K562 (cell line): ENCODE measurements at regions of chr1 and their contacts with region 1.

Region 1: DNA sequence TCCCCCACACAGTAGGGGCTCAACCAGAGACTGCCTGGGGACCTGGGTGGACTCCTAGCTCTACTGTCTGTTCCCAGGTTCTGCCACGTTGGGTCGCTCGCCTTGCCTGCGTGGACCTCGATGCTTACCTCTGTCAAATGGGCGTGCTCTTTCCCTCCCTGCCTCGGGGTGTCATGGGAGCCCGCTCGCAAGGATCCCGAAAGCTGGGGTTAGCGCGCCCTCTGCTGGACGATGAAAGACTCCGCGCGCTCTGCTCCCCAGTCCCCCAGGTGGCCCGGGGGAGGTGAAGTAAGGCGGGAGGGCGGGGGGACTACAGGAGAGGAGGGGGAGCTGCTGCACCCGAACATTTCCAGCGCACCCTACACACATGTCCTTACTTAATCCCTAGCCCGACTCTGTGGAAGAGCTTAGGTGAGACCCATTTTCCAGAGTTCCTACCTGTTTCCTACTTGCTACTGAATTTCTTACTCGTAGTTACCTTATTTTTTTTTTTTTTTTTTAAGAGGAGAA is 2.3 kb upstream of the BSND start:
- DNase-seq: peak; percentile 90 to 96 (median 94)
- ATAC-seq: peak; percentile 94
- H3K4me3 ChIP-seq: peak overlapping the region; percentile 17; the same call in 1 of the 2 replicates
- H3K27ac ChIP-seq: no peak overlapping the region
- H3K4me1 ChIP-seq: peaks cover 0 to 21% of the 10 kb centered on the region in 2 experiments; a peak in 3 of 5 replicates
- H3K27me3 ChIP-seq: peaks cover 28 to 82% of the 10 kb centered on the region in 2 experiments
- CTCF ChIP-seq: peak; percentile 81 to 96 (median 89)
- EP300 ChIP-seq: no peak
- POLR2A ChIP-seq: no peak
- RAD21 ChIP-seq: peak; percentile 90 to 94

Region 2: GRCh38 chr1:54671985-54672608 is 324.3 kb before region 1 on chr1:
- CTCF ChIA-PET with region 1: no interaction called
- POLR2A ChIA-PET with region 1: no interaction called
- in situ Hi-C with region 1: no loop called
- intact Hi-C with region 1: loop called (anchors 10 kb)
- DNase-seq: peak; percentile 69 to 86 (median 80)
- ATAC-seq: peak; percentile 93
- H3K4me3 ChIP-seq: no peak overlapping the region
- H3K27ac ChIP-seq: no peak overlapping the region
- H3K4me1 ChIP-seq: no peaks in the 10 kb centered on the region
- H3K27me3 ChIP-seq: peaks cover 13 to 19% of the 10 kb centered on the region in 2 experiments; a peak in 4 of 5 replicates
- CTCF ChIP-seq: peak; percentile 92 to 97 (median 95)
- EP300 ChIP-seq: no peak
- POLR2A ChIP-seq: no peak
- RAD21 ChIP-seq: peak; percentile 91 to 98

Region 3: GRCh38 chr1:54681358-54681757 is 315.1 kb before region 1 on chr1:
- CTCF ChIA-PET with region 1: no interaction called
- POLR2A ChIA-PET with region 1: no interaction called
- in situ Hi-C with region 1: loop called (anchors 10 kb)
- intact Hi-C with region 1: loop called (anchors 10 kb)
- DNase-seq: no peak
- ATAC-seq: no peak; the same call in 2 of the 3 replicates
- H3K4me3 ChIP-seq: no peak overlapping the region
- H3K27ac ChIP-seq: no peak overlapping the region
- H3K4me1 ChIP-seq: peaks cover 0 to 3% of the 10 kb centered on the region in 2 experiments; a peak in 1 of 5 replicates
- H3K27me3 ChIP-seq: peaks cover 45 to 69% of the 10 kb centered on the region in 2 experiments
- CTCF ChIP-seq: no peak
- EP300 ChIP-seq: no peak
- POLR2A ChIP-seq: no peak
- RAD21 ChIP-seq: no peak

Region 4: DNA sequence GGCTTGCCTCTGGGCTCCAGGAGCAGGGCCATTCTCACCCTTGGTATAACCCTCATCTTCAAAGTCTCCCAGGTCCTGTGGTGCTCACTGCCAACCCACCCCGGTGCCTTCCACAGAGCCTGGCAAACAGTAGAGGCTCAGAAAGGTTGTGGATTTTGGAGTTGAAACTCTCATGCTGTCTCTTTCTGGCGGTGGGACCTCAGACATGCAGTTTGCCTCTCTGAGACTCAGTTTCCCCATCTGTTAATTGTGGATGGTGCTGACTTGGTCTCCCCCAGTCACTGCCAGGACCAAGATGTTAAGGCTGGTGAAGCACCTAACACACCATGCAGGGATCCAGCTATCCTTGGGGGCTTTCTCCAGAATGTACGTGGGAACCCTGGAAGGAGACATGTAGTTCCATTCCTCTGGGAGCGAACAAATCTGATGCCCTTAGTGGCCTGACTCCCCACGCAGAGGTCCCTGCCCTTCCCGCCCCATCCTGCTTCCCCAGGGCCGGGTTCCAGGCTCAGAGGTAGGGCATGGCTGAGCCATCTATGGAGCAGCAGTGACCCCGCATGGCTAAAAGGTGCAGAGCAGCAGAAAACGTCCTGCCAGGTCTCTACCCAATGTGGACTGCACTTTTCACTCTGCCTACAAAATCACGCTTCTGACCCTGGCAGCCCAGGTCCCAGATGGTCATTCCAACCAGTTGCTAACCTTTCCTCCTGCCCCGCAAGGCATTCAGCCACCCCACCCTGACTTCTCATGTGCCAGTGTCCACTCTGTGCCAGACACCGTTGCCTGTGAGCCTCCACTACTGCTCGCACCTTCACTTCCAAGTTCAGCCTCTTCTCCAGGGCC is 186.1 kb before region 1 on chr1:
- CTCF ChIA-PET with region 1: no interaction called
- POLR2A ChIA-PET with region 1: no interaction called
- in situ Hi-C with region 1: no loop called
- intact Hi-C with region 1: loop called (anchors 1 kb)
- DNase-seq: peak; percentile 70 to 80 (median 79)
- ATAC-seq: peak; percentile 95
- H3K4me3 ChIP-seq: no peak overlapping the region
- H3K27ac ChIP-seq: no peak overlapping the region
- H3K4me1 ChIP-seq: peaks cover 0 to 6% of the 10 kb centered on the region in 2 experiments; a peak in 1 of 5 replicates
- H3K27me3 ChIP-seq: peaks cover 22 to 60% of the 10 kb centered on the region in 2 experiments
- CTCF ChIP-seq: peak; percentile 84 to 93 (median 92)
- EP300 ChIP-seq: no peak
- POLR2A ChIP-seq: no peak
- RAD21 ChIP-seq: peak; percentile 87 to 93

Region 5: GRCh38 chr1:54950369-54951163 is 45.8 kb before region 1 on chr1:
- CTCF ChIA-PET with region 1: interaction called, 25 read pairs
- POLR2A ChIA-PET with region 1: interaction called, 5 read pairs
- in situ Hi-C with region 1: loop called (anchors 5 kb)
- intact Hi-C with region 1: loop called (anchors 1 kb)
- DNase-seq: peak; percentile 58 to 74 (median 66)
- ATAC-seq: peak; percentile 87
- H3K4me3 ChIP-seq: no peak overlapping the region
- H3K27ac ChIP-seq: no peak overlapping the region
- H3K4me1 ChIP-seq: peaks cover 4 to 7% of the 10 kb centered on the region in 2 experiments; a peak in 4 of 5 replicates
- H3K27me3 ChIP-seq: peaks cover 0 to 15% of the 10 kb centered on the region in 2 experiments; a peak in 4 of 5 replicates
- CTCF ChIP-seq: peak; percentile 75 to 81 (median 77)
- EP300 ChIP-seq: no peak
- POLR2A ChIP-seq: no peak
- RAD21 ChIP-seq: peak; percentile 80 to 90

Region 6: GRCh38 chr1:55021965-55022546 is 25.6 kb after region 1 on chr1:
- CTCF ChIA-PET with region 1: no interaction called
- POLR2A ChIA-PET with region 1: no interaction called
- in situ Hi-C with region 1: no loop called
- intact Hi-C with region 1: loop called (anchors 1 kb)
- DNase-seq: peak; percentile 84 to 92 (median 88)
- ATAC-seq: peak; percentile 100
- H3K4me3 ChIP-seq: no peak overlapping the region
- H3K27ac ChIP-seq: peak overlapping the region; percentile 54; the same call in 1 of the 3 replicates
- H3K4me1 ChIP-seq: peaks cover 3 to 11% of the 10 kb centered on the region in 2 experiments; a peak in 4 of 5 replicates
- H3K27me3 ChIP-seq: peaks cover 3 to 13% of the 10 kb centered on the region in 2 experiments; a peak in 3 of 5 replicates
- CTCF ChIP-seq: peak; percentile 86 to 91 (median 88)
- EP300 ChIP-seq: no peak
- POLR2A ChIP-seq: no peak
- RAD21 ChIP-seq: peak; percentile 69 to 87